A549 (cell line): ENCODE measurements at regions of chr1 and their contacts with region 1.

Region 1: GRCh38 chr1:151728151-151729054 is 7.1 kb downstream of the RIIAD1 start:
- DNase-seq: no peak
- ATAC-seq: peak in 1 of 2 experiments; percentile 51; a peak in 2 of 6 replicates
- H3K4me3 ChIP-seq: no peak overlapping the region
- H3K27ac ChIP-seq: no peak overlapping the region
- H3K4me1 ChIP-seq: no peaks in the 10 kb centered on the region
- CTCF ChIP-seq: no peak
- EP300 ChIP-seq: no peak
- POLR2A ChIP-seq: no peak
- RAD21 ChIP-seq: no peak

Region 2: DNA sequence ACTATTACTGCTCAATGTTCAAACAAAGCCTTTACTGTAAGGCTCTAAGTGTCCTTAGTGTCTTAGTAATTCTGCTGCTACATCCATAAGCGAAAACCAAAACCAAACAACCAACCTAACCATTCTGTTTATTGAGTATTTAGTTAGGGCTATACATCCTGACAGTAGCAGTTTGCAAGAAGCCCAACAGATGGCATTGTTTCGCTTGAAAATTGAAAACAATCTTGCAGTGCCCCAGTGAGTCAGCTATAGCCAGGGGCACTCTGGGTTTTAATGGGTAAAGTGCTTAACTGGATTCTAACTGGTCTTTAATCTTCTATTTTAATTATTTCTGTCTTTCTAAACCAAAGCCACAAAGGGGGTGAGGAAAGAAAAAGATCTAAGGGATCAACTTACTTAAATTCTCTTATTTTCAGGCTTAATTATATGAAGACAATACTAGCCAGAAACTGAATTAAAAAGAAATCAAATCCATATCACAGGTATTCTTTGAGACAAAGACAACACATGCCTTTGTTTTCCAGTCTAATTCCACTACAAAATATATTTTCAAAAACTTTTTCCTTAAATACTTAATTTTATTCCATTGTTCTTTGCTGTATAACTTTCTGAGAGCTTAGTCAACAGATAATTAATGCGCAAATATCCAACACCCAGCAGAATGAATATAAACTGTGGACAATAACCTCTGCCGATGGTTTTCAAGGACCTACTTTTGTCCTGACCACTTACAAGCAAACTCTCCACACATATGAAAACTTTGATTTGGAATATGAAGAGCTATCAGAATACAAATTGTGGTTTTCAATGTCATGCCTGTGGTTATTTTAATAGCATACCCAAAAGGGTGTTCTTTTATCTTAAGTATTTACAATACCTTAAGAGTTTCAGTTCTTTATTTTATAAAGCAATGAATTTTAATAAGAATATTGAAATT is 284.3 kb before region 1 on chr1:
- CTCF ChIA-PET with region 1: interaction called, 12 read pairs
- POLR2A ChIA-PET with region 1: no interaction called
- DNase-seq: peak; percentile 82 to 96
- ATAC-seq: peak; percentile 98 to 99
- H3K4me3 ChIP-seq: no peak overlapping the region
- H3K27ac ChIP-seq: no peak overlapping the region
- H3K4me1 ChIP-seq: peaks cover 20% of the 10 kb centered on the region; the same call in 2 of the 3 replicates
- CTCF ChIP-seq: peak; percentile 84
- EP300 ChIP-seq: no peak
- POLR2A ChIP-seq: no peak
- RAD21 ChIP-seq: peak; percentile 80 to 84

Region 3: GRCh38 chr1:151534665-151535278 is 193.6 kb before region 1 on chr1:
- CTCF ChIA-PET with region 1: interaction called, 32 read pairs
- POLR2A ChIA-PET with region 1: interaction called, 3 read pairs
- DNase-seq: peak; percentile 74 to 77
- ATAC-seq: peak; percentile 71 to 82
- H3K4me3 ChIP-seq: no peak overlapping the region
- H3K27ac ChIP-seq: peak overlapping the region; percentile 26 to 84; a peak in 4 of 6 replicates
- H3K4me1 ChIP-seq: peaks cover 51% of the 10 kb centered on the region
- CTCF ChIP-seq: peak; percentile 93
- EP300 ChIP-seq: no peak
- POLR2A ChIP-seq: no peak
- RAD21 ChIP-seq: peak; percentile 93 to 97

Region 4: GRCh38 chr1:151539990-151540981 is 188.1 kb before region 1 on chr1 and contains the start of gene TUFT1:
- CTCF ChIA-PET with region 1: interaction called, 32 read pairs
- POLR2A ChIA-PET with region 1: interaction called, 3 read pairs
- DNase-seq: peak; percentile 82 to 94
- ATAC-seq: peak; percentile 75 to 88
- H3K4me3 ChIP-seq: peak within 1 kb of the TSS; percentile 93
- H3K27ac ChIP-seq: peak within 1 kb of the TSS; percentile 79 to 85
- H3K4me1 ChIP-seq: peaks cover 71% of the 10 kb centered on the region
- CTCF ChIP-seq: no peak
- EP300 ChIP-seq: no peak
- POLR2A ChIP-seq: peak; percentile 100
- RAD21 ChIP-seq: peak in 1 of 2 experiments; percentile 7; a peak in 2 of 5 replicates
- polyA plus RNA-seq, gene TUFT1: 24.5 and 27.5 TPM in 2 replicates

Region 5: DNA sequence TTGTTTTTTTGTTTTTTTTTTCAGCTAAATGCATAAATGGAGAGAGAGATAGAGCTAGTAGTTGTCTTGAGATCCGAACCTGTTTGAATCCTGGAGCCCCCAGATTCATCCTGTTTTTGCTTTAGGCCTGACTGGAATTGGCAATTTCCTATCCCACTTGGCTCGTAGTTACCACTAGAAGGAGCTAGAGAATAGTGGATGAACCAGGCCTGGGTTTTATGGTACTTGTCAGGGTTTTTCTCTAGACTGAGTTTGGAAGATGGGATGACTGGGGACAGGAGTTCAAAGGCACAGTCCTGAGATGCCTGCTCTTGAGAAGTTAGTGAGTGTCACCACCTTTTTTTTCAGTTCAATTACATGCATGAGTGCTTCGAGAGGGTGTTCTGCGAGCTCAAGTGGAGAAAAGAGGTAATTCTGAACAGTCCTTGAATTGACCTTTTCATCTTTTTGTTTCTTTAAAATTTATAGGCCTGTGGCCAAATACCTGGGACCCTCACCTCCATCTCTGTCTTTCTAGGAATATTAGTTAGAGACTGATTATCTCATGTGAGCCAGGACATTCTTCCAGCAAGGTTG is 35.2 kb before region 1 on chr1:
- CTCF ChIA-PET with region 1: interaction called, 24 read pairs
- POLR2A ChIA-PET with region 1: no interaction called
- DNase-seq: peak; percentile 38 to 54
- ATAC-seq: peak; percentile 83 to 90
- H3K4me3 ChIP-seq: no peak overlapping the region
- H3K27ac ChIP-seq: no peak overlapping the region
- H3K4me1 ChIP-seq: no peaks in the 10 kb centered on the region
- CTCF ChIP-seq: peak; percentile 75
- EP300 ChIP-seq: no peak
- POLR2A ChIP-seq: no peak
- RAD21 ChIP-seq: peak; percentile 73 to 86

Region 6: DNA sequence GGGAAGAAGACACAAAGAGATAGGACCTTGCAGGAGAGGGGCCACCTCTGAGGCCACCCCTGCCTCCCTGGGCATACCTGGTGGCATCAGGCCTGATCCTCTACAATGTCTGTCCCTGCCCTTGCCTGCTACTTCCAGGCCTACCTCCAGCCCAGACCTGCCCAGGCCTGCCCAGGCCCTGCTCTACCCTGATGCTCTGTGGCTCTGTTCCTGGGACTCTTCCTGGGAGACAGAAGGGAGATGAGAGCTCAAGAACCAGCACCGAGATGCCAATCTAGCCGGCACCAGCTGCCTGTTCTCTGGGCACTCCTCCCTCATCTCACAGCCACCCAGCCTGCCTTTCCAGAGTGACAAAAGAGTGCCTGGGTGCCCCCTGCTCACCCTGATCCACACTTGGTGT is 14.5 kb before region 1 on chr1:
- CTCF ChIA-PET with region 1: interaction called, 12 read pairs
- POLR2A ChIA-PET with region 1: no interaction called
- DNase-seq: no peak
- ATAC-seq: peak in 1 of 2 experiments; percentile 9; a peak in 1 of 6 replicates
- H3K4me3 ChIP-seq: no peak overlapping the region
- H3K27ac ChIP-seq: no peak overlapping the region
- H3K4me1 ChIP-seq: peaks cover 27% of the 10 kb centered on the region
- CTCF ChIP-seq: no peak
- EP300 ChIP-seq: no peak
- POLR2A ChIP-seq: no peak
- RAD21 ChIP-seq: no peak

Region 7: GRCh38 chr1:151832318-151832975 is 104.0 kb after region 1 on chr1:
- CTCF ChIA-PET with region 1: interaction called, 10 read pairs
- POLR2A ChIA-PET with region 1: no interaction called
- DNase-seq: peak in 1 of 2 experiments; percentile 38
- ATAC-seq: peak in 1 of 2 experiments; percentile 11; a peak in 1 of 6 replicates
- H3K4me3 ChIP-seq: no peak overlapping the region
- H3K27ac ChIP-seq: peak overlapping the region; percentile 25 to 48; a peak in 4 of 6 replicates
- H3K4me1 ChIP-seq: peaks cover 24% of the 10 kb centered on the region
- CTCF ChIP-seq: no peak
- EP300 ChIP-seq: no peak
- POLR2A ChIP-seq: no peak
- RAD21 ChIP-seq: no peak